Dendritic cell treated with granulocyte-macrophage colony-stimulating factor and Interleukin-4, amounts not matched to agents 40 ng/mL and 50 ng/mL, for 4 days (primary cell): ENCODE measurements at regions of chr10 and their contacts with region 1.

Region 1: DNA sequence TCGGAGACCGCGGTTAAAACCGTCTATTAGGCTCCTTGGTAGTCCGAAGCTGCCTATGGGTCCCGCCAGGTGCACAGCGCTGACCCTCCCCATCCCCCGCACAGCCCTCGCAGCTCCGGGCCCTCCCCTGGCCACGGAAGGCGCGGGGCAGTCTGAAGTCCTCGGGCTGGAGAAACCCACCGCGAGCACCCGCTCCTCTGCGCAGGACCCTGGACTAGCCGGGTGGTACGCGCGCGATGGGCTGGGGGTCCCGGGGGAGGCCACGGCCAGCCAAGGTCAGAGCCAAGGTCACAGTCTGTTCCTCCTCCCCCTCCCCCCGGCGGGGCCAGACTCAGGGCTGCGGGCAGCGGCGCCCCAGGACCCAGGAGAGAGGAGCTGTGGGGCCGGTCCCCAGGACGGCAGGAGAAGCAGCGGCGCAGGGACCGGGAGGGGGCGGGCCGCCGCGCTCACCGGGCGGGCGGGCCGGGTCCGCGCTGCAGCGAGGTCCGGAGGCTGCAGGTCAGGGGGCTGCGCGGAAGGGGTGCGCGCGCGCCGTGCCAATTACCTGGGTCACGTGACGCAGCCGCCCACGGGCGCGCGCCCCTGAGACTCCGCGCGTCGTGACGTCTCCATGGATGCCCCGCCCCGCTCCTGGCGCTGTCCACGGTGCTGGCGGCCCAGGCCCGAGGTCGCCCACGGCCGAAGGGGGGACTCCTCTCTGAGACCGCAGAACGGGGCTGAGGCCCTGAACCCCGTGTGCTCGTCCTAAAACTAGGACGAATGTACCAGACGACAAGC is at the start of gene OGDHL:
- H3K4me3 Mint-ChIP-seq: peak within 1 kb of the TSS; percentile 52
- H3K27ac Mint-ChIP-seq: no peak within 1 kb of the TSS
- H3K4me1 Mint-ChIP-seq: peaks cover 5% of the 10 kb centered on the region
- H3K27me3 Mint-ChIP-seq: peaks cover 37% of the 10 kb centered on the region

Region 2: DNA sequence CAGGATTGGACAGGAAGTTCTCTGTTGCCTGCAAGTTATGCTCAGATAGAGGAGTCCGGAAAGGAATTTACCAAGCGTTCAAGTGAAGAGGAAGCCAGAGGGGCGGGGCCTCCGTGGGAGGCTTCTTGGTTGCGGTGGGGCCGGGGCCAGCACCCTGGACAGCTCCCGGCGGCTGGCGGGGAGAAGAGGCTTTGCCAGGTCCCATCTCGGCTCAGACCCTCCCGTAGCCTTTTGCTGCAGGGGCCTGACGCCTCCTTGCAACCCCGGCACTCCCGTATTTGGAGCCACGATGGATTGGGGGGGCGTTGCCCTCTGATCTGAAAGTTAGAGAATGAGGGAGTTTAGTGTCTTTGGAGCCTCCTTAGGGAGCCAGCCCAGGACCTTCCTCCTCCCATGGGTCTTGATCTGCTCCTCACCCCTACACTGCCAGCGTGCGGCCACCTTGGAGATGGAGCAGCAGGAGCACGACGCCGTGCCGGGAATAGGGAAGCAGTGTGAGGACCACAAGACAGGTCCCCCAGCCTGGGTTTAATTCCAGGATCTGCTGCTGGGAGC is 154.9 kb before region 1 on chr10:
- intact Hi-C with region 1: loop called (anchors 5 kb)
- H3K4me3 Mint-ChIP-seq: no peak overlapping the region
- H3K27ac Mint-ChIP-seq: no peak overlapping the region
- H3K4me1 Mint-ChIP-seq: peaks cover 4% of the 10 kb centered on the region
- H3K27me3 Mint-ChIP-seq: peaks cover 67% of the 10 kb centered on the region